Activated CD4-positive, alpha-beta T cell treated with anti-CD3 and anti-CD28 coated beads, Interleukin-2, amount 10 ng/mL, durations not matched to agents 24 days and 14 days (primary cell): ENCODE measurements at regions of chr7 and their contacts with region 1.

Region 1: DNA sequence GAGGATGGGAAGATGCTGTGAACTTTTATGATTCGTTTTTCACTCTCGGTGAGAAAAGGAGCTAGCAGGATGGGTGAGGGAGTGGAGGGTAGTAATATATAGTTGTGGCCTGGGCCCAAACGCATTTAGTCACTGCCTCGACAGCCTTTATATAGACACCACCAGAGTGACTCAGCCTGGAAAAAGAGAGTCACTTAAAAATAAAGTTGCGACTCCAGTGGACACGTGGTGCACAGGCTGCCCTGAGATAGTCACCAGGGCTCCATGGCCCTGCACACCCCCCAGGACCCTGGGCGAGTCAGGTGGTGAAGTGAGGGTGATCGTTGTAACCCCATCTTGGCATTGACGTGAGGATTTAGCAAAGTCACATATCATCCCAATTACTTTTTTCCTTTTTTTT is 106.7 kb downstream of the CUX1 start:
- DNase-seq: no peak
- H3K4me3 Mint-ChIP-seq: no peak overlapping the region
- H3K27ac Mint-ChIP-seq: no peak overlapping the region
- H3K4me1 Mint-ChIP-seq: peaks cover 8% of the 10 kb centered on the region
- H3K27me3 Mint-ChIP-seq: no peaks in the 10 kb centered on the region

Region 2: DNA sequence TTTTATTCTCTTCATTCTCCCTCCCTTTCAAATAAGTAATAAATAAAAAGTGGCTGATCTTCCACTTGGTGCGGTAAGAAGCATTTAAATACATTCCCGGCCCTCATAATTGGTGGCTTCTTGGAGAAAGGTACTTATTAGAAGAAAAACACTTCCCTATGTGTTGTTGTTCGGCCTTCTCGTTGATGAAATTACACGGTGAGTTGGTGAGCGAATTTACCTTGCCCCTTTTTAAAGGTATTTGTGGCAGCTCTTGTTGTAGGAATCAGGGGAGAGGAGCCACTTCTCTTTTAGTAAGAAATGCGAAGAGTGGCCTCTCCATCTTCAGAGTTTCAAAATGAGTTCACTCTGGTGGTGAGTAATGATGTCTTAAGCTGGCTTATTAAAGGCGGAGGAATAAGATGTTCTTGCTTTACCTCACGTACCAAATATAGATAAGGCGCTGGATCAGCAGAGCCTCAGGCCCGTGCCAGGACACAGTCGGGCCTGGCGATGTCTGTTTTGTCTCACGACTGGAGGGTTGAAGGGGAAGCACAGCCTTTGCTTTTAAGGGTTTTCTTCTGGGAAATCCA is 29.2 kb after region 1 on chr7:
- intact Hi-C with region 1: loop called (anchors 1 kb)
- DNase-seq: no peak
- H3K4me3 Mint-ChIP-seq: no peak overlapping the region
- H3K27ac Mint-ChIP-seq: peak overlapping the region; percentile 70
- H3K4me1 Mint-ChIP-seq: peaks cover 12% of the 10 kb centered on the region
- H3K27me3 Mint-ChIP-seq: no peaks in the 10 kb centered on the region

Region 3: GRCh38 chr7:102425639-102426267 is 501.6 kb after region 1 on chr7:
- intact Hi-C with region 1: no loop called
- DNase-seq: peak; percentile 95
- H3K4me3 Mint-ChIP-seq: peak overlapping the region; percentile 93
- H3K27ac Mint-ChIP-seq: peak overlapping the region; percentile 100
- H3K4me1 Mint-ChIP-seq: peaks cover 60% of the 10 kb centered on the region
- H3K27me3 Mint-ChIP-seq: no peaks in the 10 kb centered on the region